ENCODE measurements at regions of chr3 and their contacts with region 1.

Region 1: DNA sequence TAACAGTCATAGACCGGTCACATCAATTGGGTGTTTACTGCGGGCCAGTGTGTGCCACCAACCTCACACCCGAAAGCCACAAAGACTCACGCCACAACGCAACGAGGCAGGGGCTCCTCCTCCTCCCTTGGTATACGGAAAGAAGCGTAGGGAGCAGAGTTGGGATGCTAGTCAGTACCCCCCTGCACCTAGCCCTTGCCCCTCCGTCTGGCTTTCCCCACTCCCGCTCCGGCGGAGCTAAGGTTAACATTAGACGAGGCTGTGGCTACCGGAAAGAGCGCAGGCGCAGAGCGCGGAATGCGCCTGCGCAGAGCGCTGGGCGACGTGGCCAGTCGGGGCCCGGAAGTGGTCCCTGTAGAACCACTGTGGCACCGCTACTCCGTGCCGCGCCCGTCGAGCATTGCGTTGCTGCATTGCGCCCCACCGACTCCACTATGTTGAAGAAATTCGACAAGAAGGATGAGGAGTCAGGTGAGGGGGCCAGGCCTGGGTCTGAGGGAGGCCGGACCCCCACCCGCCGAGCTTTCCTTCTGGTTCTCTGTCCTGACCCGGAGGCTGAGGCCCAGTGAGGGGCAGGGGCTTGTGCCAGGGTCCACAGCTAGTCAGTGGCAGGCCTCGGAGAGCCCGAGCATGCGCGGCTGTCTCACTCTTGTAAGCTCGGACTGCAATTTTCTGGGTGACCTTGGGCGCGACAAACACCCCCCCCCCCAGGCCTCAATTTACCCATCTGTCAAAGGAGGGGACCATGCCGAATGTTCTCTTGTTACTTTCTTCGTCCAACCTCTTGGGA is at the start of gene COPG1:
- DNase-seq: peak; percentile 87
- ATAC-seq: peak; percentile 87
- H3K4me3 Mint-ChIP-seq: peak within 1 kb of the TSS; percentile 92
- H3K27ac Mint-ChIP-seq: peak within 1 kb of the TSS; percentile 89
- H3K4me1 Mint-ChIP-seq: peaks cover 26% of the 10 kb centered on the region
- H3K27me3 Mint-ChIP-seq: no peaks in the 10 kb centered on the region
- CTCF ChIP-seq: no peak
- total RNA-seq, gene COPG1: 92.2 and 101 TPM in 2 replicates

Region 2: GRCh38 chr3:128879125-128879969 is 370.1 kb before region 1 on chr3 and contains the start of gene ACAD9:
- CTCF ChIA-PET with region 1: interaction called, 4 read pairs
- POLR2A ChIA-PET with region 1: interaction called, 3 read pairs
- intact Hi-C with region 1: loop called (anchors 5 kb)
- DNase-seq: peak; percentile 99
- ATAC-seq: peak; percentile 94
- H3K4me3 Mint-ChIP-seq: peak within 1 kb of the TSS; percentile 88
- H3K27ac Mint-ChIP-seq: peak within 1 kb of the TSS; percentile 92
- H3K4me1 Mint-ChIP-seq: peaks cover 52% of the 10 kb centered on the region
- H3K27me3 Mint-ChIP-seq: no peaks in the 10 kb centered on the region
- CTCF ChIP-seq: no peak
- total RNA-seq, gene ACAD9: 52.5 and 57.3 TPM in 2 replicates

Region 3: DNA sequence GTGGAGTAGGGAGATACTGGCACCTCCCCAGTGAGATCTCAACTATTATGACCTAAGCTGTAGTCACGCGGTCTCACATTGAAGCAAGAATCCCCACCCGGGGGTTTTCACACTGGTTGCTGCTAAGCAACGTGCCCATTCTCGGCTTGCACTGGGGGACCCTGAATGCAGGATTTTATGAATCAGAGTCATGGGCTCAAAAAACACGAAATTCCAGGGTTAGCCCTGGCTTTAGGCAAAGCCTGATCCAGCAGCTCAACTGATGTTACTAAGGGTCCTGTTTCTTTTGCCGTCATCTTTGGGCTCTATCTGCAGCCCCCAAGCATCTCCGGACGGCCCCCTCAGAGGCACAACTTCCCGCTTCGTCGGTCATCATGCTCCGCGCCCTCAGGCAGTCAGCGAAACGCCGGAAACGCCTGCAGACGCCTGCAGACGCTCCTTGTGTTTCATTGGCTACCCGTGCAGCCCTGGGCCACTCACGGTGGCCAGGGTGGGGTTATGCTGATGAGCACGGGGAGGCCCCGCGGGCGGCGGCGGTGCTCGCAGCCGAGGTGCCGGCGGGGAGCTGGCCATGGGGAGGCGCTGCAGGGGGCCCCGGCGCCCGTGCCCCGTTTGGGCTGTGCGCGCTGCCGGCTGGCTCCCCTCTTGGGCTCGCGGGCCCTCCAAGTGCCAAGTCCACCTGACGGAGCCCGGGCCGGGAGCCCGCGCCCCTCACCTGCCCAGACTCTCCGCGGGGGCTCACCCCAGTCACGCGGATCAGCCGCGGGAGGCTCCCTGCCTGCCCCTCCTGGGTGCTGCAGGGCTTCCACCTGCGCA is 222.5 kb before region 1 on chr3:
- CTCF ChIA-PET with region 1: interaction called, 3 read pairs
- POLR2A ChIA-PET with region 1: interaction called, 6 read pairs
- intact Hi-C with region 1: loop called (anchors 1 kb)
- DNase-seq: peak; percentile 83
- ATAC-seq: peak; percentile 97
- H3K4me3 Mint-ChIP-seq: peak overlapping the region; percentile 85
- H3K27ac Mint-ChIP-seq: peak overlapping the region; percentile 94
- H3K4me1 Mint-ChIP-seq: peaks cover 12% of the 10 kb centered on the region
- H3K27me3 Mint-ChIP-seq: no peaks in the 10 kb centered on the region
- CTCF ChIP-seq: no peak

Region 4: DNA sequence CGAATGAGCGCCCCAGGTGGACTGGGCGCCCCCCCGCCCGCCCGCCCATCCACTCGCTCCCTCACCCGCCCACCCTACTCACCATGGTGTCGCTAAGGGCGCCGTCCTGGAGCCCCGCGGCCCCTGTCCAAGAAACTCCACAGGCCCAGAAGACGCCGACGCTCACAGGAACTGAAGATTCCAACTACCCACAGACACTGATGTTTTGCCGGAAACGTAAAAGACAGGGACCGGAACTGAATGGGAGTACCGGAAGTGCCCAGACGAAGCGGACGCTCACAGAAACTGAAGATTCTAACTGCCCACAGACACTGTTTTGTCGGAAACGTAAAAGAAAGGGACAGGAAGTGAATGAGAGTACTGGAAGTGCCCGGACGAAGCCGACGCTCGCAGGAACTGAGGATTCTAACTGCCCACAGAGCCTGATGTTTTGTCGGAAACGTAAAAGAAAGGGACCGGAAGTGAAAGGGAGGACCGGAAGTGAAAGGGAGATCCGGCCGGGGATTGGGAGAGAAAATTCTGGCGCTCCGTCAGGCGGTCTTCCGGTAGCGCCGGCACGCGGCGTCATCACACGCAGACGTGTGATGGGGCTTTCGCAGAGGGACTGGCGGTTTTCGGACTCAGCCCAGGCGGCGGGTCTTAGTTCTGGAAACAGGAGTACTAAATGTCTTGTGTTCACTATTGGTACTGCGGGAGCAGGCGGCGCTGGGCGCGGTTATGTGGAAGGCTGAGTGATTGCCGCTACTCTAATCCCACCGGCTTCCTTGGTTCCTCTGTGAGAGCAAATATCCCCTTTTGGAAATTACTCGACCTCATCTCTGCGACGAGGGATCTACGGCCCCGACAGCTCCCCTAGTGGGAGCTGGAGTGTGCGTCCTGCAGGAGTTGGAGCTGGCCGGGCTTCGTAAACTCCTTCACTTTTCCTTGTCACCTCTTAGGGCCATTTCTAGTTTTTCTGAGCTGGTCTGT is 88.3 kb before region 1 on chr3 and contains the start of gene ISY1:
- CTCF ChIA-PET with region 1: interaction called, 45 read pairs
- POLR2A ChIA-PET with region 1: interaction called, 14 read pairs
- intact Hi-C with region 1: loop called (anchors 1 kb)
- DNase-seq: peak; percentile 80
- ATAC-seq: peak; percentile 84
- H3K4me3 Mint-ChIP-seq: peak within 1 kb of the TSS; percentile 98
- H3K27ac Mint-ChIP-seq: peak within 1 kb of the TSS; percentile 100
- H3K4me1 Mint-ChIP-seq: peaks cover 39% of the 10 kb centered on the region
- H3K27me3 Mint-ChIP-seq: no peaks in the 10 kb centered on the region
- CTCF ChIP-seq: no peak
- total RNA-seq, gene ISY1: 47.7 and 52.9 TPM in 2 replicates

Region 5: GRCh38 chr3:129211772-129212171 is 37.7 kb before region 1 on chr3:
- CTCF ChIA-PET with region 1: no interaction called
- POLR2A ChIA-PET with region 1: no interaction called
- intact Hi-C with region 1: no loop called
- DNase-seq: no peak
- ATAC-seq: no peak
- H3K4me3 Mint-ChIP-seq: no peak overlapping the region
- H3K27ac Mint-ChIP-seq: no peak overlapping the region
- H3K4me1 Mint-ChIP-seq: no peaks in the 10 kb centered on the region
- H3K27me3 Mint-ChIP-seq: peaks cover 3% of the 10 kb centered on the region
- CTCF ChIP-seq: no peak

Region 6: DNA sequence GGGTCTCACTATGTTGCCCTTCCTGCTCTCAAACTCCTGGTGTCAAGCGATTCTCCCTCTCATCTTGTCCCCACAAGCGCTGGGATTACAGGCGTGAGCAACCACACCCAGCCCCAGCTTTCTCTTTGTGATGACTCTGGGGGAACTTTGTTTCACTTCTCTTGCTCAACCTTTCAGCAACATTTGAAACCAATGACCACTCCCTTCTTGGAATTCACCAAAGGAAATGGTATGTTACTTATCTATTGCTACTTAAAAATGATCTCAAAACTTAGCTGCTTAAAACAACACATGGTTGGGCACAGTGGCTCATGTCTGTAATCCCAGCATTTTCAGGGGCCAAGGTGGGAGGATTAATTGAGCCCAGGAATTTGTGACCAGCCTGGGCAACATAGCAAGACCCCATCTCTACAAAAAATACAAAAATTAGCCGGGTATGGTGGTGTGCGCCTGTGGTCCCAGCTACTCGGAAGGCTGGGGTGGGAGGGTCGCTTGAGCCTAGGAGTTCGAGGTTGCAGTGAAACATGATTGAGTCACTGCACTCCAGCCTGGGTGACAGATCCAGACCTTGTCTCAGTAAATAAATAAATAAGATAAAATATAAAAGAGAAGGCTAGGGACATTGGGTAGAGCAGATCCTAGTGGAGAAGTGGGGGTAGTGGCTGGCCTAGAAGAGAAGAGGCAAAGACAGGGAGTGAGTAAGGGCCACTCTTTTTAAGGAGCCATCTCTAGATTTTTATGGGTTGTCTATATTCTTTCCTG is 10.3 kb before region 1 on chr3:
- CTCF ChIA-PET with region 1: interaction called, 10 read pairs
- POLR2A ChIA-PET with region 1: interaction called, 28 read pairs
- intact Hi-C with region 1: no loop called
- DNase-seq: no peak
- ATAC-seq: peak; percentile 31
- H3K4me3 Mint-ChIP-seq: no peak overlapping the region
- H3K27ac Mint-ChIP-seq: peak overlapping the region; percentile 22
- H3K4me1 Mint-ChIP-seq: peaks cover 24% of the 10 kb centered on the region
- H3K27me3 Mint-ChIP-seq: no peaks in the 10 kb centered on the region
- CTCF ChIP-seq: no peak